ENCODE measurements at regions of chr16 and their contacts with region 1.

Region 1: GRCh38 chr16:4580245-4580644 is 24.1 kb downstream of the C16orf96 start:
- DNase-seq: no peak
- ATAC-seq: no peak

Region 2: GRCh38 chr16:4511441-4512082 is 68.7 kb before region 1 on chr16:
- intact Hi-C with region 1: loop called in 1 of 2 experiments (anchors 10 kb)
- DNase-seq: peak; percentile 68 to 70
- ATAC-seq: peak; percentile 82

Region 3: DNA sequence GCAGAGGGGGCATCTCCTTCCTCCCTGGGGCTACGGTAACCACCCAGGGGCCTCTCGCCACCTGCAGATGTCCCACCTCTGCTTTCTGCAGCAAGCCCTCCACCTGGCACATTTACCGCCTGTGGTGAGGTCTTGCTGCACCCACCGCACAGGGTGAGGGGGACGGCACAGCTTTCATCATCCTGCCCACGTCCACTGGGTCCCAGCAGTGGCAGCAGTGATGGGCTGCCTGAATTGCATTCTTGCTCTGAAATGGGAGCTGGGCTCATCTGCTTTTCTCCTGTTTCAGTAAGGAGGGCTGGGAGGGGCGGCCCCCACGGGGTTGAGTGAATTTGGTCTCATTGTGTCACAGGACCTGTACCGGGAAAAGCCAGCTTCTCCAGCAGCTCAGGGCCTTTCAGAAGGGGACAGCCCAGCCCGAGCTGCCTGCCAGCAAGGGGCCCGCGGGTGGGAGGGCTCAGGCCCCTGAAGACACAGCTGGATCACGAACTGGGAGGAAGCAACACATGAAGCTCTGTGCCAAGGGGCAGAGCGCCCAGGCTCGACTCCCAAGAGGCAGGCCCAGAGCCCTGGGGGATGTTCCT is 166.8 kb after region 1 on chr16:
- intact Hi-C with region 1: no loop called
- DNase-seq: no peak
- ATAC-seq: no peak

Region 4: GRCh38 chr16:4936991-4937781 is 356.9 kb after region 1 on chr16 and contains the start of gene PPL:
- intact Hi-C with region 1: no loop called
- DNase-seq: peak; percentile 94
- ATAC-seq: peak; percentile 92
- total RNA-seq, gene PPL: 14.7 to 15.6 TPM

Measured in left colon (tissue), 2 donors.